ENCODE measurements at regions of chr7 and their contacts with region 1.

Region 1: GRCh38 chr7:74401137-74401859 is 52.4 kb upstream of the GTF2IRD1 start:
- DNase-seq: peak; percentile 67 to 87 (median 82)
- ATAC-seq: peak; percentile 50 to 58
- H3K4me3 ChIP-seq: no peak overlapping the region
- H3K27ac ChIP-seq: no peak overlapping the region
- H3K4me1 ChIP-seq: no peaks in the 10 kb centered on the region
- H3K27me3 ChIP-seq: no peaks in the 10 kb centered on the region

Region 2: DNA sequence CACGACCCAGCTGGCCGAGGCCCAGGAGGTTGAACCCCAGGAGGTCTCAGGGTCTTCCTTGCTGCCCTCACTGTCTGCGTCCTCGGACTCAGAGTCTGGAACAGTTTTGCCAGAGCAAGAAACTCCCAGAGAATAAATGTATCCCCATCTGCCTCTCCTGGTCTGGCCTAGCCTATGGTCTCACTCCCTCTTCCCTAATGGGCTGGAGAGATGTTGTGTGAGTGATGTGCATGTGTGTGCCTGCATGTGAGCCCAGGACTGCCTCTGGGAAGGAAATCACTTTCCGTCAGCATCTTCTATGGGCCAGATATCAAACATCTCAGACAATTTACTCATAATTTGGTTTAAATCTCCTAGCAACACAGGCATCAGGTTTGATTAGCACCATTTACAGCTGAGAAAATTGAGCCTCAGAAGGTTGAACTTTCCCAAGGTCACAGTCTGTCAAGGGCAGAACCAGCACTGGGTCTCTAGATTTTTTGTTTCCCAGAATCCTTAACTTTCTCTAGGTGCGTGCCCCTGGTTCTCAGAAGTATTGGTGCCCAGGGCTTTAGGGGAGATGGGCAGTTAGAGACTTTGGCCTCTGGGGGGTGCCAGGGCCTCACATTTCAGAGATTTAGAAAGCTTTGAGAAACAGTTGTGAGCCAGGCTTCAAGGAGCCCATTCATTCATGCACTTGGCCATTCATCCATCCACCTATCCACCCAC is 535.4 kb before region 1 on chr7:
- intact Hi-C with region 1: loop called in 1 of 4 experiments (anchors 5 kb)
- DNase-seq: peak; percentile 63 to 73 (median 69)
- ATAC-seq: peak; percentile 60 to 76
- H3K4me3 ChIP-seq: no peak overlapping the region
- H3K27ac ChIP-seq: no peak overlapping the region
- H3K4me1 ChIP-seq: no peaks in the 10 kb centered on the region
- H3K27me3 ChIP-seq: no peaks in the 10 kb centered on the region

Region 3: DNA sequence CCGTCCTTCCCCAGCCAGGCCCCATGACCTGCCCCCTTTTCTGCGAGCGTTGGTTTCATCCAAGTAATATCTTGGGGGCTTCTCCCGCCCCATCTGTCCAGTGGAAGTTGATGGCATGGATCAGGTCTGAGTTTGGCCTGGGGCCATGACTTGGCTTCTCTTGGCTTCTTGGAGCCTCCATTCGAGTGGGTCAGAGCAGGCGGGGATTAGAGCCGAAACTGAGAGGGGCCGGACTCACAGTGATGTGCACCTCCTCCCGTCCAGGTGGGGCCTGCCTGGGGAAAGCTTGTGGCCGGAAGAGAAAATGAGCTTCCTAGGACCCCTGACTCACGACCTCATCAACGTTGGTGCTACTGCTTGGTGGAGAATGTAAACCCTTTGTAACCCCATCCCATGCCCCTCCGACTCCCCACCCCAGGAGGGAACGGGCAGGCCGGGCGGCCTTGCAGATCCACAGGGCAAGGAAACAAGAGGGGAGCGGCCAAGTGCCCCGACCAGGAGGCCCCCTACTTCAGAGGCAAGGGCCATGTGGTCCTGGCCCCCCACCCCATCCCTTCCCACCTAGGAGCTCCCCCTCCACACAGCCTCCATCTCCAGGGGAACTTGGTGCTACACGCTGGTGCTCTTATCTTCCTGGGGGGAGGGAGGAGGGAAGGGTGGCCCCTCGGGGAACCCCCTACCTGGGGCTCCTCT is 332.8 kb before region 1 on chr7:
- intact Hi-C with region 1: loop called in 3 of 4 experiments (anchors 5 to 10 kb)
- DNase-seq: peak in 1 of 3 donors; percentile 63
- ATAC-seq: peak; percentile 3 to 4
- H3K4me3 ChIP-seq: no peak overlapping the region
- H3K27ac ChIP-seq: no peak overlapping the region
- H3K4me1 ChIP-seq: no peaks in the 10 kb centered on the region
- H3K27me3 ChIP-seq: no peaks in the 10 kb centered on the region

Region 4: DNA sequence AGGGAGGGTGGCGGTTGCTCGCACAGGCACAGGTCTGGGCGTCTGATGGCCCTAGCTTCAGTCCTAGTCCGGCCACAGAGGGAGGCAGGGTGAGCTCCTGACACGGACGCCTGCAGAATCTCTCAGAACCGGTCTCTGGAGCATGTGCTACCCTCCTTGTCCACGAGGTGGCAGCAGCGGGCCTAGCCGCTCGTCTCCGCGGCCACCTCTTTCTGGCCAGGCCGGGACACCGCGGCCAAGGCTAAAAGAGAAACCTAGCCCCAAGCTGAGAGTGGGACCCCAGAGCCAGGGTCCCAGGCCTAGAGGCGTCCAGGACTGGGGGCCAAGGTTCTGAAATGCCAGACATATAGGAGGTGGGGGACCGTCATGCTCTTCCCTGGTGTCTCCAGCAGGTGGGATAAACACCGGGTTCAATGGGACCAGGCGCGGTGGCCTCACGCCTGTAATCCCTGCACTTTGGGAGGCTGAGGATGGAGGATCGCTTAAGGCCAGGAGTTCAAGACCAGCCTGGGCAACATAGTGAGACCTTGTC is 194.6 kb before region 1 on chr7:
- intact Hi-C with region 1: loop called (anchors 2 to 5 kb)
- DNase-seq: peak; percentile 86 to 95 (median 94)
- ATAC-seq: peak; percentile 74 to 86
- H3K4me3 ChIP-seq: no peak overlapping the region
- H3K27ac ChIP-seq: no peak overlapping the region
- H3K4me1 ChIP-seq: no peaks in the 10 kb centered on the region
- H3K27me3 ChIP-seq: no peaks in the 10 kb centered on the region

Region 5: GRCh38 chr7:74690474-74690873 is 289.2 kb after region 1 on chr7:
- intact Hi-C with region 1: loop called in 1 of 4 experiments (anchors 10 kb)
- DNase-seq: no peak
- ATAC-seq: peak in 1 of 2 donors; percentile 29
- H3K4me3 ChIP-seq: no peak overlapping the region
- H3K27ac ChIP-seq: no peak overlapping the region
- H3K4me1 ChIP-seq: peaks cover 3% of the 10 kb centered on the region
- H3K27me3 ChIP-seq: no peaks in the 10 kb centered on the region

Measured in right cardiac atrium (tissue), 5 donors.